Right ventricle myocardium superior (tissue), 1 donor: ENCODE measurements at regions of chr9 and their contacts with region 1.

Region 1: DNA sequence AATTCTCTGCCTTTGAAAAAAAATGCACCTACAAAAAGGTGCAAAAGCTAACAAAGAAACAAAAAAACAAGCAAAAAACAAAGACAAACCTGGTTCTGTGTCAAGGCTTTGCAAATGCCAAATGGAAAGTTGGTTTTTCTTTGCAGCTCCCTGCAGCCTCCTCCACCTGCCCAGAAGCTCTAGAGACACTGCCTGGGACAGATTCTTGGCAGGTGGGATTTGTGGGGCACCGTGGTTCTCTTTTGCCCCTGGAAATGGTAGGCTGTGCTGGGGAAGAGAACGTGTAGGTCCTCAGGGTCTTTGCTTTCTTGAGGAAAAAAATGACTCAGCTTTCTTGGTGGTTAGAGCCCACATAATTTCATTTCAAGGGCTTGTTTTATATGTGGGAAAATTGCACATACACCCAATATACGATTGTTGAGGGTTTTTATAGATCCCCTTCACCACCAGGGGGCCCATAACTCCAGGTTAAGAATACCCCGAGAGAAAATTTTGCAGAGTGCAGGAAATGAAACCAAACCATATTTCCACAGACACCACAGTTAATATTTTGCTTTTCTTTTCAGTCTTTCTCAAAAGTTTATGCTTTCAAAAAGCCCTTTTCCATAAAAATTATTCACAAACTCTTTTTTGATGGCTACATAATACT is 58.7 kb downstream of the NXNL2 start:
- DNase-seq: no peak
- ATAC-seq: peak; percentile 85

Region 2: GRCh38 chr9:88534456-88535261 is 59.0 kb before region 1 on chr9 and contains the start of gene NXNL2:
- intact Hi-C with region 1: no loop called
- DNase-seq: peak; percentile 80
- ATAC-seq: peak; percentile 75
- total RNA-seq, gene NXNL2: not detected

Region 3: DNA sequence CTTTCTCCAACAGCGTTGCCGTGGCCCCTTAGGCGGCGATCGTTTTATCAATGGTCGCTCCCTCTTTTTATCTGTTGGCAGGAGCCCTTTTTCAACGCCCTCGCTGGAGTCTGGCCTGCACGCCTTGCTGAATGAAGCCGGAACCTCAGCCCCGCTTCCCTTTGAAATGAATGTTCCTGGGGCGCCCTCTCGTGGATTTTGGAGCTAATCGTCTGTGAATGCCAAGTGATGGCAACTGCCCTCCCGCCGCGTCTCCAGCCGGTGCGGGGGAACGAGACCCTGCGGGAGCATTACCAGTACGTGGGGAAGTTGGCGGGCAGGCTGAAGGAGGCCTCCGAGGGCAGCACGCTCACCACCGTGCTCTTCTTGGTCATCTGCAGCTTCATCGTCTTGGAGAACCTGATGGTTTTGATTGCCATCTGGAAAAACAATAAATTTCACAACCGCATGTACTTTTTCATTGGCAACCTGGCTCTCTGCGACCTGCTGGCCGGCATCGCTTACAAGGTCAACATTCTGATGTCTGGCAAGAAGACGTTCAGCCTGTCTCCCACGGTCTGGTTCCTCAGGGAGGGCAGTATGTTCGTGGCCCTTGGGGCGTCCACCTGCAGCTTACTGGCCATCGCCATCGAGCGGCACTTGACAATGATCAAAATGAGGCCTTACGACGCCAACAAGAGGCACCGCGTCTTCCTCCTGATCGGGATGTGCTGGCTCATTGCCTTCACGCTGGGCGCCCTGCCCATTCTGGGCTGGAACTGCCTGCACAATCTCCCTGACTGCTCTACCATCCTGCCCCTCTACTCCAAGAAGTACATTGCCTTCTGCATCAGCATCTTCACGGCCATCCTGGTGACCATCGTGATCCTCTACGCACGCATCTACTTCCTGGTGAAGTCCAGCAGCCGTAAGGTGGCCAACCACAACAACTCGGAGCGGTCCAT is 407.6 kb after region 1 on chr9:
- intact Hi-C with region 1: loop called (anchors 2 kb)
- DNase-seq: peak; percentile 92
- ATAC-seq: peak; percentile 76

Region 4: GRCh38 chr9:89278997-89279739 is 685.5 kb after region 1 on chr9:
- intact Hi-C with region 1: loop called (anchors 10 kb)
- DNase-seq: no peak
- ATAC-seq: no peak